HEK293 (cell line): ENCODE measurements at regions of chr5 and their contacts with region 1.

Region 1: GRCh38 chr5:128174951-128175350 is 91.4 kb downstream of the SLC12A2 start:
- H3K4me3 ChIP-seq: no peak overlapping the region
- H3K27ac ChIP-seq: no peak overlapping the region
- H3K4me1 ChIP-seq: no peaks in the 10 kb centered on the region
- CTCF ChIP-seq: no peak

Region 2: GRCh38 chr5:128201065-128201926 is 26.3 kb after region 1 on chr5:
- CTCF ChIA-PET with region 1: interaction called, 13 read pairs
- POLR2A ChIA-PET with region 1: no interaction called
- H3K4me3 ChIP-seq: peak overlapping the region; percentile 16
- H3K27ac ChIP-seq: no peak overlapping the region
- H3K4me1 ChIP-seq: no peaks in the 10 kb centered on the region
- CTCF ChIP-seq: peak; percentile 56

Region 3: DNA sequence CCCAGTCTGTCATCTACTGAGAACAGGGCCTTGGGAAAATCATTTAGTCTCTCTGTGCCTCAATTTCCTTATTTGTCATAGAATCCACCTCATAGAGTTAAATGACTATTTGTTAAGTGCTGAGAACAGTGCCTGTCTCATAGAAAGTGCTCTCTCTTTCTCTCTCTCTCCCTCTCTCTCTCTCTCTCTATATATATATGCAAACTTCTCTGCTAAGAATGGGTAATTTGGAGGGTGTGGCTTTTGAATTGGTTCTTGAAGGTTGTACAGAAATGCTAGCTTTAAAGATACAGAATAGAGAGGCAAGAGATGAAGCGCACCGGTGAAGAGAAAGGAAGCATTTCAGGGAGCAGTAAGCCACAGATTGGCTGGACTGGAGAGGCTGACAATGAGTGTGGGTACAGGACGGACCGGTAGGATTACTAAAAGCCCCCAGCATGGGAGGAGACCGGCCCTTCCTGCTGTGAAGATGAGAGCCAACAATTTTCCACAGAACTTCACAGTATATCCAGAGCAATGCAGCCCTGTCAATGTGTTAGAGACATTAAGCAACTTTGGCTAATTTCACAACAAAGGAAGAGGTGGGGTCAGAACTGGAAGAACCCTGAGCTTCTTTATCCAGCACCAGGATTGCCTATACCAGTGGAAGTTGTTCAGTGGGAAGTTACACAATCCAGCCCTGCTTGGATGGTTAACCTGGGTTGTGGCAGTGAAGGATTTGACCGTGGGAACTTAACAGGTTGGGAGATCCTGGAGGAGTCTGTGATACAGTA is 165.9 kb after region 1 on chr5:
- CTCF ChIA-PET with region 1: no interaction called
- POLR2A ChIA-PET with region 1: no interaction called
- H3K4me3 ChIP-seq: no peak overlapping the region
- H3K27ac ChIP-seq: no peak overlapping the region
- H3K4me1 ChIP-seq: no peaks in the 10 kb centered on the region
- CTCF ChIP-seq: no peak